ENCODE measurements at regions of chr15 and their contacts with region 1.

Region 1: GRCh38 chr15:40928821-40929659 is at the start of gene DLL4:
- DNase-seq: peak; percentile 68

Region 2: DNA sequence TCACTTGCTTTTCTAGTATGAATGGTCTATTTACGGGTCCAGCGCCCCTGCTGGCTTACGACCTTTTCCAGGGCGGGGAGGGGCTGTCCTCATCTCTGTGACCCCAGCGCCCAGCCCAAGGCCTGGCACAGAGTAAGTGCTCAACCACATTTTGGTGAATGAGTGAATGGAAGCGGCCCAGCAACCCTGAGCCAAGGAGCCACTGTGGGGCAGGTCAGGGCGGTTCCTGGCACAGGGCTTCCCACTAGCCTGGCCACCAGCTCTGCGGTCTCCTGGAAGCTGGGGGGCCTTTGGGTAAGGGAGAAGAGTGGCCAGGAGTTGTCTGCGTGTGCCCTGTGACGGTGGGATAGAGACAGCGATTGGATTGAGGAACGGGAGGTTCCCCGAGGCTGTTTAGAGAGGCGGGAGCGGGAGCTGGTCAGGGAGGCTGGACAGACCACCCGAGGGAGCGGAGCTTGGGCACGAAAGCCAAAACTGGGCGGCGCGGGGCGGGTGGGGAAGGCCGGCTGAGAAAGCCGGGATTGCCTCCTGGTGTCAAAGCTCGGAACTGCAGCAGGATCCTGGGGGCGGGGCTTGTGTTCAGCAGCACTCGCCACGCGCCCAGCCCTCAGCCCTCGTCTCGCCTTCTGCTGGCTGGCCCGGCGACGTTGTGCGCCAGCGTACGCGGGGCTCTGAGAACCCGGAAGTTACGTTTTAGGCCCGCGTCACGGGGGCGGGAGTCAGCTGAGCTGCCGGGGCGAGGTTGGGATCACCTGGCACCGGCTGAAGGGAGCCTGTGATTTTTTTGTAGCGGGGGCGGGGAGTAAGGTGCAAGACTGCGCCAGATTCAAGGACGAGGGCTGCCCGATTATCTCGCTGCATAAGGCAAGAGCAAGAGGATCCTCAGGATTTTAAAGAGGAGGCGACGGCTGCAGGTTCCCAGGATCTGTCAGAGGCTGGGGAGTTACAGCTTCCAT is 35.0 kb before region 1 on chr15 and contains the start of gene VPS18:
- CTCF ChIA-PET with region 1: no interaction called
- POLR2A ChIA-PET with region 1: no interaction called
- DNase-seq: peak; percentile 88

Region 3: GRCh38 chr15:40941528-40942336 is 12.7 kb after region 1 on chr15:
- CTCF ChIA-PET with region 1: interaction called, 22 read pairs
- POLR2A ChIA-PET with region 1: interaction called, 24 read pairs
- DNase-seq: peak; percentile 81

Region 4: GRCh38 chr15:40974879-40975278 is 45.8 kb after region 1 on chr15:
- CTCF ChIA-PET with region 1: no interaction called
- POLR2A ChIA-PET with region 1: no interaction called
- DNase-seq: no peak

Region 5: DNA sequence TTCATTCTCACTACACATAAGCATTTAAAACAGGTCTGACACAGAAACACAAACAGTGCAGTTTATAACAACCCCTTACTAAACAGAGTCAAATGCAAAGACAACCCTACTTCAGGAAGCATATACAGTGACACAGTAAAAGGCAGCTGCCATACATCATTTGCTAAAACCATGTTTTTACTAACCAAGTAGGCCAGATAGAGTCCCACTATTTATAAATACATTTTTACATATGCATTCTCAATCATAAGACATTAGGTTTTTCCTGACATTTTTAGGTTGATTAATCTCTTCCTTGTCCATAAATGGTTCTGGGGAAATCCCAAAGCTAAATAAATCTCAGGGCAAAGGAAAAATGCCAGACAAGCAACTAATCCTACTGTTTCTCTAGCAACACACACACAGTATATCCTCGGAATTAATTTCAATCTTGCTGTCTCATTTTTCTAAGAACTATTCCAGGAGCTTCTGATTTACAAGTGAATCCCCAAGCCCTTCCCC is 63.3 kb after region 1 on chr15:
- CTCF ChIA-PET with region 1: no interaction called
- POLR2A ChIA-PET with region 1: no interaction called
- DNase-seq: no peak

Region 6: GRCh38 chr15:41125931-41126642 is 197.0 kb after region 1 on chr15:
- CTCF ChIA-PET with region 1: no interaction called
- POLR2A ChIA-PET with region 1: no interaction called
- DNase-seq: no peak

Measured in HEK293T (cell line).